GM10248 (cell line): ENCODE measurements at regions of chr13 and their contacts with region 1.

Region 1: DNA sequence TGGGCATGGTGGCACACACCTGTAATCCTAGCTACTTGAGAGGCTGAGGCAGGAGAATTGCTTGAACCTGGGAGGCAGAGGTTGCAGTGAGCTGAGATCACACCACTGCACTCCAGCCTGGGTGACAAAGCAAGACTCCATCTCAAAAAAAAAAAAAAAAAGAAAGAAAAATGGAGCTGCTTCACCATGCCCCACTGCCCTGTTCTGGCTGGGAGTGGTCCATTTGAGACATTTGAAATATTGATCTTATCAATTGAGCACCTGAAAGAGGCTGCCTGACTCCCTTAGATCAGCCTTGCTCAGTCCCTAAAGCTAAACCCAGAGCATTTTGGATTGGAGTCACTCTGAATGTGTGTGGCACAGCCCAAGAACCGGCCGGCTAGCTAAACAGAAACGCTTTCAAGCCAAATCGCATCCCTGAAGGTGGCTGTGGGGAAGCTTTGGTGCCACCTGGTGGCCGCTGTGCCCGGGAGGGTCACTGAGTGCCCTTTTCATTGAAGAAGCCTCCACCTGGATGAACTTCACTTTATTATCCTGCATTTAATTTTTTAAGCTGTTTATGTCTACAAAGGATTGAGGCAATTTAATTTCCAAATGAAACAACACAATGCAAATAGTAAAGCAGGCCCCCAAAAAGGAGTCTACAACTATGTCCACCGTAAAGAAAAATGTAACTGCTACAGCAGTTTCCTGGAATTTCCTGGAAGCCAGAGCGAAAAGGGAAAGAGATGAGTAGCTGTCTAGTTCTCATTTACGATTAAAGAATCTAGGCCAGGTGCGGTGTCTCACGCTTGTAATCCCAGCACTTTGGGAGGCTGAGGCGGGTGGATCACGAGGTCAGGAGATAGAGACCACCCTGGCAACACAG is 53.1 kb upstream of the SERPINE3 start:
- DNase-seq: peak; percentile 76
- CTCF ChIP-seq: peak; percentile 93

Region 2: GRCh38 chr13:51134763-51135365 is 151.5 kb before region 1 on chr13:
- CTCF ChIA-PET with region 1: interaction called, 187 read pairs
- POLR2A ChIA-PET with region 1: no interaction called
- DNase-seq: no peak
- CTCF ChIP-seq: no peak

Region 3: DNA sequence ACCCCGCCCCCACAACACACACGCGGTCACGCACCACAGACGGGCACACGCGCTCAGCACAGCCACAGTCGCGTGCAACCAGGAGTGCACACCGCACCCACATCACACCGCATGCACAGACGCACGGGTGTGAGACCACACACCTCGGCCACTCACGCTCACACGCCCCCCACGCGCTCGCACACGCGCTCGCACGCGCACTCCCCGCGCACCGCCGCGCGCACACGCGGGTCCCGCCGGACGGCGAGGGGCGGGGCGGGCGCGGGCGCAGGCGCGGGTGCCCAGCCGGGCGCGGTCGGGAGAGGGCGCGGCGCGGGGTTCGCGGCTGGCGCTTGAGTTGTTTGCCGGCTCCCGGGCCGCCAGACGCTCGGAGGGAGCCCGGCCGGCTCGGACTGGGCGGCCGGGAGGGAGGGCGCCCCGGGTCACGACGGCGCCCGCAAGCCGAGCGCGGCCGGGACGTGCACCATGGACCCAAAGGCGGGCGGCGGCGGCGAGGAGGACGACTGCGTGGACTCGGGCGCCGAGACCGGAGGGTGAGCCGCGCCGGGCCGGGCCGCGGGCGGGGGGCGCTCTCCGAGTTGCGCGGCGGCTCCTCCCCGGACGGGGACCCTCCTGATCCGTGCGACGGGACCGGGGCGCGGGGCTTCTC is 64.2 kb before region 1 on chr13 and contains the start of gene FAM124A:
- CTCF ChIA-PET with region 1: interaction called, 16 read pairs
- POLR2A ChIA-PET with region 1: no interaction called
- DNase-seq: peak; percentile 63
- CTCF ChIP-seq: peak; percentile 53

Region 4: GRCh38 chr13:51262501-51263211 is 23.7 kb before region 1 on chr13:
- CTCF ChIA-PET with region 1: interaction called, 16 read pairs
- POLR2A ChIA-PET with region 1: no interaction called
- DNase-seq: no peak
- CTCF ChIP-seq: peak; percentile 12

Region 5: DNA sequence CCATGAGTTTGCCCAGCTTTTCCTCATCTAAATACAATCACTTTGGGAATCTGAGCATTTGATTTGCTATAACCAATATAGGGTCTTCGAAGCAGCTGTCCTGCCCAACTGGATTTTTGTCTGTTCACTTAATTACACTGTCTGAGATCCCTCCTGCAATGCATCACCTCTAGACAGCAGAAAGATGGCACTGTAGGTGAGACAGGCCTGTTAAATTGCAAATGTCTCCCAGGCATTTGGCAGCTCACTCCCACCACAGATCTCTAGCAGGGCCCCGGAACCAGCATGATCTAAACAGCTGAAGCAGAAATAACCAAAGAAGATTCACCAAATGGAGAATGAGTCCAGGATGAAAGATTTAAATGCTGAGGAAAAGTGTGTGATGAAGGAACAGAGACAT is 11.2 kb after region 1 on chr13:
- CTCF ChIA-PET with region 1: interaction called, 64 read pairs
- POLR2A ChIA-PET with region 1: no interaction called
- DNase-seq: no peak
- CTCF ChIP-seq: peak; percentile 35

Region 6: GRCh38 chr13:51311957-51312520 is 25.7 kb after region 1 on chr13:
- CTCF ChIA-PET with region 1: interaction called, 12 read pairs
- POLR2A ChIA-PET with region 1: no interaction called
- DNase-seq: no peak
- CTCF ChIP-seq: no peak

Region 7: GRCh38 chr13:51797664-51798488 is 511.5 kb after region 1 on chr13:
- CTCF ChIA-PET with region 1: interaction called, 37 read pairs
- POLR2A ChIA-PET with region 1: no interaction called
- DNase-seq: peak; percentile 61
- CTCF ChIP-seq: peak; percentile 67